GM10248 (cell line): ENCODE measurements at regions of chr5 and their contacts with region 1.

Region 1: GRCh38 chr5:127072861-127073846 is at the start of gene C5orf63:
- DNase-seq: peak; percentile 81
- CTCF ChIP-seq: no peak

Region 2: DNA sequence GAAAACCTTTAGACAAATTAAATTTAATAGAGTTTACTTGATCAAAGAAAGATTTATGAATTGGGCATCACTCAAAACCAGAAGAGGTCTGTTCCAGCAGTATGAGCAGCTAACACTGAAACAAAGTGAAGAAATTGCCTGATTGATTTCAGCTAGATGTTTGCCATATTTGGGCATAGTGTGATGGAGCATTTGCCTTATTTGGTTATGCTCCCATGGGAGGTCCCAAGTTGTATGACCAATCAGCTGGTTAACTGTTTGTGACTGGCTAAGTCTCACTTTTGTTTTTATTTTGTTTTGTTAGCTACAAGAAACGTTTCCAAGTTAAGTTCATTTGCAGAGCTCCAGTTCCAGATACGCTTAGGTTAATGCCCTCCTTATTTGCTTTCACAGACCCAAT is 349.5 kb before region 1 on chr5:
- CTCF ChIA-PET with region 1: no interaction called
- POLR2A ChIA-PET with region 1: no interaction called
- DNase-seq: no peak
- CTCF ChIP-seq: no peak

Region 3: DNA sequence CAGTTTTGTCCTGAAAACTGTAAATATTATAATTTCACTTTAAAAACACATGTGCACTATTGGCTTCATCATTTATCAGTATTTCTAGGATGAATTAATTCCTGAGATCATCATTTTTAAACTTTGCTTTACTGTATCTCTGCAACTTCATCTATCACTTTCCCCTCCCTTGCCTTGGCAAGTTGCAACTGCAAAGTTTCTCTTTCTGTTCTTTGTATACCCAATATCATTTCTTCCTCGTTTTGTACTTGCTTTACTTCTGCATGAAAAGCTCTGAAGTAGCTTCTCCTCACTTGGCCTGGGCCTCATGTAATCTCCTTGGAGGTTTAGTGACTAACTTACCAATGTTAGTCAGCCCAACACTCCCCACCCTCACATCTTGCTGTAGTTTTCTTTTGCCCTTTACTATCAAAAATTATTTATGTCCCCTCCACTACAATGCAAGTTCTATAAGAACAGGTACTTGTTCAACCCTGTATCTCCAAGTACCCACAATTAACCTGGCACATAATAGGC is 12.6 kb before region 1 on chr5:
- CTCF ChIA-PET with region 1: interaction called, 22 read pairs
- POLR2A ChIA-PET with region 1: no interaction called
- DNase-seq: no peak
- CTCF ChIP-seq: no peak

Region 4: GRCh38 chr5:127117657-127118056 is 44.5 kb after region 1 on chr5:
- CTCF ChIA-PET with region 1: no interaction called
- POLR2A ChIA-PET with region 1: no interaction called
- DNase-seq: no peak
- CTCF ChIP-seq: no peak

Region 5: DNA sequence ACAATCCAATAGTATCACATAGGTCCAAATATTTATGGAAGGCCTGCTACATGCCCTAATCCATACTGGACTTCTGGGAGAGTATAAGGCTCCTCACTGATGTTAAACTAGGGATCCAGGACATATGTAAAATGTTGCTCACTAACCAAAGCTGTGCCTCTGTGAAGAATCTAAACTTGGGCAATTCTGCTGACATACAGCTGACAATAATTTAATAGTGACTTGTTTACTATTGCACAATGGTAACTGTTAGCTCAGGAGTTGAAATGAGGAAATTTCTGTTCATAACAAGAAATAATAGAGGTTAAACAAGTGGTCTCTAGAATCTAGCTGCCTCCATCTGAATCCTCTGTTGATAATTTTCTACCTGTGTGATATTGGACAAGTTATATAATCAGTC is 560.9 kb after region 1 on chr5:
- CTCF ChIA-PET with region 1: no interaction called
- POLR2A ChIA-PET with region 1: no interaction called
- DNase-seq: no peak
- CTCF ChIP-seq: no peak

Region 6: DNA sequence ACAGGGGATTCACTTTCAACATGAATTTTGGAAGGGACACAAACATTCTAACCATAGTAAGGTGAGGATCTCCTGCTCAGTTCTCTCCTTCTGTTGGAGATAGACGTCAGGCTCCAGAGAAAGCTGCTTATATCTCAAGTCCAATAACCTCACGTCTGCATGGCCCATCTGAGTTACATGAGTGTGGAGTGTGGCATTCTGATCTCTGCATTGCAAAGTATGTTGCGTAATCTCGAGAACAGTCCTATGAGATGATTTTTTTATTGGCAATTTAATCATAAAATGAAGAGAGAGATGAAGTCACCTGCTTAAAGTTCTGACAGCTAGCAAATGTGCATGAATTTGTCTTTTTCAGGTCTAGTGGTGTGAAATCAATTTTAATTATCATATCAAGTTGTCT is 1129.2 kb after region 1 on chr5:
- CTCF ChIA-PET with region 1: no interaction called
- POLR2A ChIA-PET with region 1: no interaction called
- DNase-seq: no peak
- CTCF ChIP-seq: no peak